ENCODE measurements at regions of chr12 and their contacts with region 1.

Region 1: DNA sequence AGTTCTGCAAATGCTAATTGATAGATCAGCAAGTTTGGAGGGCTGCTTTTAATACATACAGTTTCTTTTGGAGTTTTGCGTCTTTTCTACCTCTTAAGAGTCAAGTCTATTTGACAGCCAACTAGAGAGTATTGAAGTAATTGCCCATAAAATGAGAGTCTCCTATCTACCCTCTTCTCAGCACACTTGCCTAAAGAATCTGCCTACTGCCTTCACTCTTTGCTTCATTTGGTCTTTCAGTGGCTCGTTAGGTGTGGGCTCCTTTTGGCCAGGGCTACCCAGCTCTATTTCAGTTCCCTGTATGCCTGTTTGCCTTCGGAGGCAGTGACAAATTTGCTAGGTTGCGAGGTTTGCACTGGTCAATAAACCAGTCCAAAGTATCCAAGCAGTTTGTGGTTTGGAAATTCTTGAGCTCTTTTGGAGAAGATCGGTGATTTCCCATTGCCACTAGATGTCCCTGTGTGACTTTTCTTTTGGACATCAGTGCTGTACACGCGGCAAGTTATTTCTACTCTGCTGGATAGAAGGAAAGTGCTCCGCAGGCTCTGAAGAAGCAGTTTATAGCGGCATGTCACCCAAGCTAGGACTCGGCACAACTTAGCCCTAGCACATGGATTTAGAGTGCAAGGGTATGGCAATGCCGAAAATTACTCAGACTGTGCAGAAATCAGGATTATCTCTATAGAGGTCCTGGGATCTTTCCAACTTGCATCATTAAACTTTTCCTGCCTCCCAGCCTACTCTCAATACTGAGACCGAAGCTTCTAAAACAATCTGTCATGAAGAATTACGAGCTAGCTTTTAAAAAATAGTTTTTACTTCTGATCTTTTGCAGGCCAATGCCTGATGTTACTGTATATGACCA is 38.6 kb downstream of the MGST1 start:
- DNase-seq: peak; percentile 44
- H3K4me3 ChIP-seq: no peak overlapping the region
- H3K27ac ChIP-seq: no peak overlapping the region
- H3K4me1 ChIP-seq: peaks cover 9% of the 10 kb centered on the region
- H3K27me3 ChIP-seq: no peaks in the 10 kb centered on the region
- CTCF ChIP-seq: peak; percentile 26 to 64

Region 2: DNA sequence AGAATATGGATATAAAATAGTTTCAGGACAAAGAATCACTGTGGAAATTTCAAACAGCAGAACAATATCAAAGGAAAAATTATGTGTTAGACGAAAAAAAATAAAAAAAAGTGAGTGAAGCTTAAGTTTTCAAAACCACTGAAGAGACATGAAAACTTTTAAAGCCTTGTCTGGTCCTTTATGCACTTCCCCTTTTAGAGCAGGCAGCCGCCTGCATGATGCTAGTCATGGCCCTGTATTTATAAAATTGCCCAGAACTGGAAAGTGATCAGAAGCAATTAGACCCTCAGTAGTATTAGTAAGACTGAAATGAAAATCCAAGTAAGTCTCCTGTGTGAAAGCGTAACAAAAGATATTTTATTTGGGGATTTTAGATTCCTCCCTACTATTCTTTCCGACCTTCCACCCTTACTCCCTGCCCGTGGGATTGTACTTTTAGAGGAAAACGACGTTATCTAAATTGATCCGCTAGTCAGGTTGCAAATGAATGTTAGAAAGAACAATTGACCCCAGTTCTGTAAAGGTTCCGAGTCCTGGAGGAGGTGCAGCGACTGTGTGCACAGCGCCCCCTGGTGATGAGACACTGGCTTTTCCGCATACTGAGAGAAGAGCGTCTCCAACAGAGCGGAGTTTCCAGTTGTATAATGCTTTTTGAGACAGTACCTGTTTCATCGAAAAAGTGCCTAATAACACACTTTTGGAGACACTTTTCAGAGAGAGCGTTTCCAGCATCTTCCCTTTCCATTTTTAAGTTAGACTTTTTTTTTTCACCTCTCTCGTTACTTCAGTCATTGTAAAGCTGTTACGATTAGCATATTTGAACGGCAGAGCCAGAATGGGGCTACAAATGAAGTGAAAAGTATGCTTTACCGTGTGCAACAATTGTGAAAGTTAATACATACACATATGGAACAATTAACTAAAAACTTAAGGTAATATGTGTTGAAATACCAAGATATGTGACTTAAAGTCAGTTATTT is 26.2 kb before region 1 on chr12:
- CTCF ChIA-PET with region 1: no interaction called
- dilution Hi-C with region 1: no loop called
- in situ Hi-C with region 1: no loop called
- intact Hi-C with region 1: no loop called
- DNase-seq: peak; percentile 25
- H3K4me3 ChIP-seq: no peak overlapping the region
- H3K27ac ChIP-seq: no peak overlapping the region
- H3K4me1 ChIP-seq: no peaks in the 10 kb centered on the region
- H3K27me3 ChIP-seq: no peaks in the 10 kb centered on the region
- CTCF ChIP-seq: peak; percentile 83 to 87

Region 3: DNA sequence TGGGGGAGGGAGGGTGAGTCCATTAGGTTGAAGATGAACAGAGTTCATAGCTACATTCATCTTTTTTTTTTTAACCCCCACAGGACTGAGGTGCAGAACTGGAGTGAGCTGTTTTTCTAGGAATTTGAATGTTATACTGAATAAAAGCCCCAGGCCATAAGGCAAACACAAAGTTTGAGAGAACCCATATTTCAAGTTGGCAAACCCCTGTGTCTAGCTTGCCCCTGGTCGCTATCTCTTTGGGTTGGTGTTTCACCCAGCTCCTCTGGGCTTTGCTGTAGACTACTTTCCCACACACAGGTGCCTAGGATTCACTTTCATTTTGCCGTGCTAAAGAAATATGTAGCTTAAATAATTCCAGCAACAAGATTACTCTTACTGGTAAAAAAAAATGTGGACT is 225.1 kb after region 1 on chr12:
- CTCF ChIA-PET with region 1: no interaction called
- dilution Hi-C with region 1: no loop called
- in situ Hi-C with region 1: no loop called
- intact Hi-C with region 1: loop called (anchors 10 kb)
- DNase-seq: no peak
- H3K4me3 ChIP-seq: no peak overlapping the region
- H3K27ac ChIP-seq: no peak overlapping the region
- H3K4me1 ChIP-seq: peaks cover 9% of the 10 kb centered on the region
- H3K27me3 ChIP-seq: no peaks in the 10 kb centered on the region
- CTCF ChIP-seq: no peak

Region 4: DNA sequence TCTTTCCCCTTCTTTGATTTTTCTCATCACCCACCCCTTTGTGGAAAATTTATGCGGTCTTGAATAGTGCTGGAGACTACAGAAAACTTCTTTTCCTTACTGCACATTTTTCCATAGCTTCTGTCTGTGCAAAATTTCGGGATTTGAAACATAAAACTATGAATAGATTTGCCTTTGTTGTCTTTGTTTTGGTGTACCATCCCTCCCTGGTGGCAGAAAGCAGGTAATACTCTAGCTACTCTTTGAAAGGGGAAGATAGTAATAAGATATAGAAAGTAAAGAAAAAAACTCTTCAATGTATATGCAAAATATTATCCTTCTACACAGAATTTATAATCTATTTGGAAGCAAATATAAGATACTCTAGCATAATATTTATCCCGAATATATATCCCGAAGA is 299.1 kb after region 1 on chr12:
- CTCF ChIA-PET with region 1: interaction called, 7 read pairs
- dilution Hi-C with region 1: no loop called
- in situ Hi-C with region 1: loop called in 1 of 2 experiments (anchors 25 kb)
- intact Hi-C with region 1: loop called (anchors 1 kb)
- DNase-seq: peak; percentile 2
- H3K4me3 ChIP-seq: no peak overlapping the region
- H3K27ac ChIP-seq: no peak overlapping the region
- H3K4me1 ChIP-seq: no peaks in the 10 kb centered on the region
- H3K27me3 ChIP-seq: no peaks in the 10 kb centered on the region
- CTCF ChIP-seq: peak; percentile 29 to 62

Region 5: DNA sequence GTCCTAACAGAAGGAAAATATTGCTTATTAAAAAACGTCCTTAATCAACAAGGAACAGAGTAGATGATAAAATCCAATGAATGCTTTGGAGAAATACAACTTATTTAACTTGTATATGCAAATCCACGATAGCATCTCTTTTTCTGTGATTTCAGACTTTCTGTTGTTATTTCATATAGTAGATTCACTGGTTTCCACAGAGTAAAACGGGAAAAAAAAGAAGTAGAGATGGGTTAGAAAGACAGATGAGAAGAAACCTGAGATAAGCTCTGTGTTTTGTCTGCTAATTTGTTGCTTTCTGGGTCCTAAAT is 1256.3 kb after region 1 on chr12:
- CTCF ChIA-PET with region 1: no interaction called
- dilution Hi-C with region 1: no loop called
- in situ Hi-C with region 1: no loop called
- intact Hi-C with region 1: loop called (anchors 5 kb)
- DNase-seq: no peak
- H3K4me3 ChIP-seq: no peak overlapping the region
- H3K27ac ChIP-seq: no peak overlapping the region
- H3K4me1 ChIP-seq: no peaks in the 10 kb centered on the region
- H3K27me3 ChIP-seq: no peaks in the 10 kb centered on the region
- CTCF ChIP-seq: no peak

Measured in mammary epithelial cell (primary cell).